AG04450 (cell line): ENCODE measurements at regions of chr4 and their contacts with region 1.

Region 1: GRCh38 chr4:128454281-128455075 is 166.9 kb upstream of the PGRMC2 start:
- DNase-seq: peak; percentile 89
- H3K4me3 ChIP-seq: no peak overlapping the region
- H3K27ac ChIP-seq: peak overlapping the region; percentile 21
- H3K27me3 ChIP-seq: no peaks in the 10 kb centered on the region
- CTCF ChIP-seq: peak; percentile 90

Region 2: DNA sequence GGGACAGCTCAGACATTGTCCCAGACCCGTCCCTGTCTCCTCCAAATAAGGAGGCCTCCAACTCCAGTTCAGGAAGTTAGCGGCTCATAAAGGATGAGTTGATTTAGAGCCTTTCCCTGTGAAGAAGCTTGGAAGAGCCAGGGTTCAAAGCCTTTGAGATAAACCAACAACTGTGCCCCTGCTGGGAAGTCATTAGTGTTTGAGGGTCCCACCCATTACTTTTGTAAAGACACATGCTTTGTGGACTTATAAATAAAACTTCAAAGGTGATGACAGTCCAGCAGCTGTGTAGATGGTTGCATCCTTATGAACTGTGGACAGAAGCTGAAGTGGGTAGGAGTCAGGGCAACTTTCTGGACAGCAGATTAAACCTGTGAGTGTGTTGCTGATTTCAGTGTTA is 80.8 kb before region 1 on chr4:
- CTCF ChIA-PET with region 1: interaction called, 13 read pairs
- POLR2A ChIA-PET with region 1: no interaction called
- DNase-seq: no peak
- H3K4me3 ChIP-seq: no peak overlapping the region
- H3K27ac ChIP-seq: no peak overlapping the region
- H3K27me3 ChIP-seq: no peaks in the 10 kb centered on the region
- CTCF ChIP-seq: no peak

Region 3: GRCh38 chr4:128427832-128428366 is 26.6 kb before region 1 on chr4:
- CTCF ChIA-PET with region 1: interaction called, 10 read pairs
- POLR2A ChIA-PET with region 1: no interaction called
- DNase-seq: peak; percentile 50
- H3K4me3 ChIP-seq: no peak overlapping the region
- H3K27ac ChIP-seq: no peak overlapping the region
- H3K27me3 ChIP-seq: no peaks in the 10 kb centered on the region
- CTCF ChIP-seq: peak; percentile 61

Region 4: DNA sequence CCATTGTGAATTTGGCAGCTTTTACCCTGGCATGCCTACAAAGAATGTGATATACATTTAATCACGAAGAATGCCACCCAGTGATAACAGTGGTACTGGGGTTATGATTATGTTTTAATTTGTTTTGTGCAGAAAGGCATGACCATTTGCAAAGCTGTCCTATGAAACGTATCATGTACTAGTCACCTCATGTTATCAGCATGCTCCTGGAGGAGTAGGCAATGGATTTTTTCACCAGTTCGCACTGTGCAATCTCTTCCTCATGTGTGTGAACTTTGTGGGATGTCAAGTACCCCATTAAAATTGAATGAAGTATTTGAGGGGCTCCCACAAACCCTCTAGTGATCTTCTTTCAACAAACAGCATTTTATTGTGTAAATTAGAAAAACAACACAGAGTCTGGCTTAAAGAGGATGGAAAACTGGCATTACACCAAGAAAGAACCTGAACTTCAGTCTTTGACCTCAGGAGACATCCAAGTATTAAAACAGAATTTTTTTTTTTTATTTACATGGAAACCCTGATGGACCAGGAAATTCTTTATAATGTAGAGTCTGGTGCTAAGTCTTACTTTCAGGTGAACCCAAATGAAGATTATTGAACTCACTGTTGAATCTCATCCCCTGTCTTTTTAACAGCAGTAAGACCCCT is 33.7 kb after region 1 on chr4:
- CTCF ChIA-PET with region 1: interaction called, 10 read pairs
- POLR2A ChIA-PET with region 1: no interaction called
- DNase-seq: no peak
- H3K4me3 ChIP-seq: no peak overlapping the region
- H3K27ac ChIP-seq: no peak overlapping the region
- H3K27me3 ChIP-seq: no peaks in the 10 kb centered on the region
- CTCF ChIP-seq: no peak

Region 5: DNA sequence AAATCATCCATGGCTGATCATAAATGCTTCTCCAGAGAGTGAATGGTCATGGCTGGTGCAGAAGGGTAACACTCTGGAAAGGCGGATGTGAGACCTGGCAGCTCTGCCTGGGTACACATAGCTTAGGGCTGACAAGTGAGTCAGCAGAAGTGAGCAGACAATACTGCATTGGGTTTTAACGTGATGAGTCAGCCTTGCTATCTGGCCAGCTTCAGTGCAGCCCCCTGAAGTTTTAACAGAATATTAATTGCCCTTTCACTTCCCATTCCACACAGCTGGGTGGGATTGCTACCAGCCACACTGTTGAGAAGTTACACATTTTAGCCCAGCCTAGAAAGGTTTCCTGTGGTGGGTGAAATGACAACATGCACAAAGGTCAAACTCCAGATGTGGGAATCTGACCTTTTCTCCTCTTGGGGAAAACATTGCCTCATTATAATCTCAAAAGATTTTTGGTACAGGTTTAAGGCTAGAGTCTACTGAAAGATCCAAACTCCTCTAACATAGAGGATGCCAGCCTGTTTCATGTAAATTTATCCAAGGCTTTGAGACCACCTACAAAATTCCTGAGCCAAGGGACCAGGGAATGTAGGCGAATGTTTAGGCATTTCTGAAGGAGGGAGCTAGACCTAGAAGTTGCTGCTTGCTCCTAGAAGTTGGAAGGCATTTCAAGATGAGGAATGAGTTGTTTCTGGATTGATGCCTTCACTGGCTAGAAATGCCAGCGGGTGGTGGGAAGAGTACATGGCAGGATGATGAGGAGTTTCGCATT is 63.4 kb after region 1 on chr4:
- CTCF ChIA-PET with region 1: interaction called, 11 read pairs
- POLR2A ChIA-PET with region 1: no interaction called
- DNase-seq: peak; percentile 95
- H3K4me3 ChIP-seq: no peak overlapping the region
- H3K27ac ChIP-seq: peak overlapping the region; percentile 92
- H3K27me3 ChIP-seq: no peaks in the 10 kb centered on the region
- CTCF ChIP-seq: no peak

Region 6: DNA sequence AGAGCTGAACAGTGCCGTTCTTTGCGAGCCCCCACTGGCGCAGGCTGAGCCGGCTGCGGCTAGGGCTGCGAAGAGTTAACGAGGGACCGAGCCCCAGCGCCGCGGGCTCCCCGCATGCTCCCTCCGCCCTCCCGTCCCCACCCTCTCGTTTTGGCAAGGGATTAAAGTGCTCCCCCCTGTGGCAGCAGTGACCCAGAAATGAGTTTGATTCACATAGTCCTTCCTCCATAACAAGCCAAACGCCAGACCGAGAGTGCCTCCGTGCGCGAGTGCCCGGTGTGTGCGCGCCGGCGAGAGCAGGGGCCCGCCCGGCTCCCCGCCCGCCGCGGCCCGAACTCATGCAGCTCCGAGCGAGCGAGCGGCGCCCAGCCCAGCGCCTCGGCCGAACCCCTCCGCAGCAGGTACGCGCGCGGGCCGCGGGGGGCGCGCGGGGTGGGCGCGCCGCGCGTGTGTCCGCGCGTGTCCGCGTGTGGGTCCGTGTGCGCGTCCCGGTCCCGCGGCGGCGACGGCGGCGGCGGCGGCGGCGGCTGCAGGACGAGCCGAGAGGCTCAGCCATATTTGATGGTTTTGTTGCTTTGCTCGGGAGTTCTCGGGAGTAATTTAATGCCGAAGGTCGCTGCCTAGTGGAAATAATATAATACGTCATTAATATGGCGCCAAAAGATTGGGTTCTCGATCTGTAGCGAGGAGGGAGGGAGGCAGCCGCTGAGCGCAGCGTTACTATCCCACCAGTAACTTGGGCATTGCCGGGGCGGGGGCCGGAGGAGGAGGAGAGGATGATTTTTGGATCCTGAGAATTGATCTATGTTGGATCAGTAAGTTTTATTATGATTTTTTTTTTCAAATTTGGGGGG is 355.2 kb after region 1 on chr4 and contains the start of gene JADE1:
- CTCF ChIA-PET with region 1: interaction called, 23 read pairs
- POLR2A ChIA-PET with region 1: interaction called, 13 read pairs
- DNase-seq: peak; percentile 90
- H3K4me3 ChIP-seq: peak within 1 kb of the TSS; percentile 87
- H3K27ac ChIP-seq: peak within 1 kb of the TSS; percentile 89
- H3K27me3 ChIP-seq: no peaks in the 10 kb centered on the region
- CTCF ChIP-seq: peak; percentile 62
- polyA plus RNA-seq, gene JADE1: 20.4 and 23.2 TPM in 2 replicates